ENCODE measurements at regions of chr3 and their contacts with region 1.

Region 1: DNA sequence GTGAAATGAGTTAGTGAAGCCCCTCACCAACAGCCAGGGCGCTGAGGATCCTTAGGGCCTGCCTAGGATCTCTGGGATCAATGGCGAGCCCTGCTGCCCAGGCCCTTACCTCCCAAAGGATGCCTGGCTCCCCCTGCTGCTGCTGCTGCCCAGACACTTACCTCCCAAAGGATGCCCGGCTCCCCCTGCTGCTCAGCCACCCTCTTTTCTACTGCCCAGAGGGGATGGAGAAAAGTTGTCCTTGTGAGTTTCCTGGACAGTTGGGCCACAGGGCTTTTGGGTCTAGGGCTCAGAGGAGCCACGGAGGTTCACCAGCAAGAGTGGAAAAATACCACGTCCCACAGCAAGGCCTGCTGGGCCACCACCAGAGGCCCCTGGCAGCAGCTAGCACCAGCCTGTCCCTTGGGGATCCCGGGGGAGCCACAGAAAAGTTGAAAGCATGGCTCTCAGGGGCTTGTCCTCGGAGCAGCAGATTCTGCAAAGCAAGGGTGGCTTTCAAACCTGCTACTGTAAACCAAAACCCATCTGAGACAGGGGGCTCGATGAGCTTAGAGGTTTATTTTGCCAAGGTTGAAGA is 59.4 kb downstream of the SLC6A6 start:
- DNase-seq: peak; percentile 65 to 75
- ATAC-seq: peak; percentile 89

Region 2: GRCh38 chr3:13895155-13896105 is 566.4 kb before region 1 on chr3:
- intact Hi-C with region 1: loop called in 1 of 2 experiments (anchors 10 kb)
- DNase-seq: peak; percentile 95 to 97
- ATAC-seq: peak; percentile 98

Region 3: GRCh38 chr3:14203521-14204079 is 258.2 kb before region 1 on chr3:
- intact Hi-C with region 1: loop called in 1 of 2 experiments (anchors 5 kb)
- DNase-seq: peak; percentile 57 to 60
- ATAC-seq: peak; percentile 71

Region 4: DNA sequence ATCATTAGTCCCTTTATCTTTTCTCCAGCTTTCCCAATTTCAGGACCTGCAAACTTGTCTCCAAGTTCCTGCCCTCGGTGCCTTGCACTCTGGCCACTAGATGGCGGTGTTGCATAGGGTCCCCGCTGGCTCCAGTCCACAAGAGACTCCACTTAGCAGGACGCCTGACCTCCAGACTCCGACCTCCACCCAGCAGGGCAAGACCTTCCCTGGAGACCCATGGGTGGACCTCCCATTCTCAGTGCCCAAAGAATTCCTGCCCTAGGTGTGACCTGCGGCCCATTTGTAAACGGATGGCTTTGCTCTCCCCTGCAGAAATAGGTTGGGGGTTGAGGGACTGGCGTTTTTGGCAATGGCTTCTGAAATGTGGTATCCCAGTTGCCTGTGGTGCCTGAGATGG is 200.6 kb before region 1 on chr3:
- intact Hi-C with region 1: loop called (anchors 2 to 5 kb)
- DNase-seq: peak; percentile 74 to 87
- ATAC-seq: peak; percentile 70

Region 5: DNA sequence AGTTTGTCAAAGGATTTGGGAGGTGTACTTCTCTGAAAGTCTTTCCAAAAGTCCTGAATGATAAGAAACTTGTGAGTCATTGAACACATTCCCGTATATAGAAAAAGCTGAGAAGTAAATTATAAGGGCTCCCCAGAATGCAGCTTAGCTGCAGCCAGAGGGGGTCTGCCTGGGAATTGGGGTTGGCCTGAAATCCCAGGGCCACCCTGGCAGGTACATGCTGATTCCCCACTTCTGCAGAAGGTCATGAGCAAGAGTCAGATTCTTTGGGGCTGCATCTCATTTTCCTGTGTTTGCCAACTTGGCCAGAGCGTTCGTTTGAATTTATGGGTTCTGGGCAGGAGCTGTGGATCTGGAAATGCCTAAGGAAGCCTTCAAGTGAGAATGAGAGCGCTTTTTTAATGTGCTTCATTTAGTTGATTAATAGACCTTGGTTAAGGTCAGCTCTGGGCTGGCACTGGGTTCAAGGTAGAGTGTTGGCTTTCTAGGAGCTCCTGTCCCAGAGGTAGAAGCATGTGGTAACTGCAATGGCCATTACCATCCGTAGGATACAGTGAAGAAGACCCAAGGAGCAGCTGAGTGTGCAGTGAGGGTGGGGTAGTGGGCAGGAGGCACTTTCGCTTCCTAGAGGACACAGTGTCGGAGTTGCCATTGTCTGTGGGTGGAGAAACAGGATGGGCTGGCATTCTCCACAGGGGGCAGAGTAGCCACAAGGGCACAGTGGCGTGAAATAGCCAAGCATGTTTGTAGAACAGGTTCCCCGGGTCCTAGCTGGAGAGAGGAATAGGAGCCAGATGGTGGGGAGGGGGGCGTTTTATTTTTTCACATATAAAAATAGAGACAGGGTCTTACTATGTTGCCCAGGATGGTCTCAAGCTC is 56.2 kb before region 1 on chr3:
- intact Hi-C with region 1: loop called in 1 of 2 experiments (anchors 5 kb)
- DNase-seq: no peak
- ATAC-seq: no peak

Region 6: DNA sequence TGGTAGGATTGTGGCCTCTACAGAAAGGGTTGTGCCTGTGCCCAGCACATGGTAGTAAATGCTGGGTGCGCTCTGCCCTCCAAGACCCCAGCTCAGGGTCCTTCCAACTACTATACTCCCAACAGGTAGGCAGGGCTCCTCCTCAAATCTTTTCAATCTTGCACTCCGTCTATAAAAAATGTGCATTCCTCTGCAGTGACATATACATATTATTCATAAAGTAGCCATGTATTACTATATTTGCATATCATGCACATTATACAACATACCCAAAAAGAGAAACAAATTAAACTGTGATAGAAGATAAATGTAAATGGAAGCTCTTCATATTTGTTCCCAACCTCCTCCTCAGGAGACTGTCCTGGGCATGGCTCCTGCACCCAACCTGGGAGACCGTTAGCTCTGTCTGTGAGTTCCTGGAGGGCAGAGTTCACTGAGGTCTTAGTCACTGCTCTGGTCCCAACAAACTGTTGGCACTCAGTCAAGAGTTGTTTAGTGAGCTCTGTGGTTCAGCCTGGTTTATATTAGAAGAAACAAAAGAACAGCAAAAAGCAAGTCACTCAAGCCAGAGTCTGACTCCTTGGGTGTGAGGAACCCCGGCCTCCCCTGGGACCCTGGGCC is 126.0 kb after region 1 on chr3:
- intact Hi-C with region 1: no loop called
- DNase-seq: no peak
- ATAC-seq: peak; percentile 58

Measured in left colon (tissue), 2 donors.